ENCODE measurements at regions of chr20 and their contacts with region 1.

Region 1: GRCh38 chr20:51306503-51307358 is 235.8 kb downstream of the NFATC2 start:
- DNase-seq: peak; percentile 43 to 81
- ATAC-seq: peak; percentile 97

Region 2: DNA sequence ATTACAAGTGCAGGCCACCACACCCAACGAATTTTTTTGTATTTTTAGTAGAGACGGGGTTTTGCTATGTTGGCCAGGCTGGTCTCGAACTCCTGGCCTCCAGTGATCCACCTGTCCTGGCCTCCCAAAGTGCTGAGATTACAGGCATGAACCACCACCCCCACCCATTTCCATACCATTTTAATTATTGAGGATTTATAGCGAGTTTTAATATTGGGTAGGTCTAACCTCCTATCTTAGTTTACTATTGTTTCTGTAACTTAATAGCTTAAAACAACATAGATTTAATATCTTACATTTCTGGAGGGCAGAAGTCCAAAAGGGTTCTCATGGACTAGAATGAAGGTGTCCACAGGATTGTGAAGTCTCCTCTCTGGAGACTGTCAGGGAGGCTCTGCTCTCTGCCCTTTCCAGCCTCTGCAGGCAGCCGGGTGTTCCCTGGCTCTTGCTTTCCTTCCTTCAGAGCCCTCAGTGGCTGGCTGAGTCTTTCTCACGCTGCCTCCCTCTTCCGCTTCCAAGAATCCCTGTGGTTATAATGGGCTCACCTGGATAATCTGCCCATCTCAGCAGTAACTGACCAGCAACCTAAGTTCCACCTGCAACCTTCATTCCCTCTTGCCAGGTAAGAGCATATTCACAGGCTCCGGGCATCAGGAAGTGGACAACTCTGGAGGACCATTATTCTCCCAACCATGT is 530.5 kb before region 1 on chr20:
- intact Hi-C with region 1: no loop called
- DNase-seq: no peak
- ATAC-seq: no peak

Region 3: DNA sequence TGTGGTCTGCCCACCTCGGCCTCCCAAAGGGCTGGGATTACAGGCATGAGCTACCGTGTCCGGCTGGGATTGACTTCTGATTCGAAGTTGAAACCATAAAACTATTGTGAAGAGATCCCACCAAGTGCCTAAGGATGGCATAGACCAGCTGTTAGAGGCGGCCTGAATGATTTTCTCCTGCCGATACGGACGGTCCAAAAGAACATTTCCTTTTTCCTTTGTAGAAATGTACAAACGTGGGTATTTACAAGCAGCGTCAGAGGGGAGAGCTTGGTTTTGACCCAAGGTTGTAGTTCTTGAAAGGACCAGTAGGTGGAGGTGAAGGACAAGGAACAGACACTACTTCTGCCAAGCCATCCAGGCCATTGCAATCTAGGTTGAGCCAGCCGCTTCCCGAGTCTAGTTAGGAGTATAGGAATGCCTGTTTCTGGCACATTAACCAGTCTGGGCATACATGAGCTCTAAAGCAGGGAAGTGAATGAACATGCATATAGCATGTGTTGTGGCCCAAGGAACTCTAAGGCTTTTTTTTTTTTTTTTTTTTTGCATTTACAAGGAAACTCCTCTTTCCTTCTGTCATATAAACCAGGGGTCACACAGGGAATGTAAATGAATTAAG is 319.0 kb before region 1 on chr20:
- intact Hi-C with region 1: loop called (anchors 5 kb)
- DNase-seq: peak; percentile 58 to 61
- ATAC-seq: peak; percentile 87

Region 4: GRCh38 chr20:50992733-50993457 is 313.8 kb before region 1 on chr20:
- intact Hi-C with region 1: loop called (anchors 5 kb)
- DNase-seq: peak; percentile 20 to 28
- ATAC-seq: peak; percentile 92